Endothelial cell of umbilical vein (primary cell): ENCODE measurements at regions of chr4 and their contacts with region 1.

Region 1: GRCh38 chr4:6546681-6547447 is 28.1 kb upstream of the MAN2B2 start:
- DNase-seq: peak; percentile 44
- H3K4me3 ChIP-seq: no peak overlapping the region
- H3K27ac ChIP-seq: no peak overlapping the region
- H3K4me1 ChIP-seq: no peaks in the 10 kb centered on the region
- H3K27me3 ChIP-seq: no peaks in the 10 kb centered on the region
- CTCF ChIP-seq: peak; percentile 89 to 94
- POLR2A ChIP-seq: no peak

Region 2: GRCh38 chr4:5998333-5998936 is 548.4 kb before region 1 on chr4:
- CTCF ChIA-PET with region 1: interaction called, 14 read pairs
- POLR2A ChIA-PET with region 1: no interaction called
- dilution Hi-C with region 1: no loop called
- intact Hi-C with region 1: loop called (anchors 2 kb)
- DNase-seq: peak; percentile 46
- H3K4me3 ChIP-seq: no peak overlapping the region
- H3K27ac ChIP-seq: no peak overlapping the region
- H3K4me1 ChIP-seq: no peaks in the 10 kb centered on the region
- H3K27me3 ChIP-seq: no peaks in the 10 kb centered on the region
- CTCF ChIP-seq: peak; percentile 88 to 90
- POLR2A ChIP-seq: no peak

Region 3: GRCh38 chr4:6409381-6409780 is 137.5 kb before region 1 on chr4:
- CTCF ChIA-PET with region 1: interaction called, 3 read pairs
- POLR2A ChIA-PET with region 1: interaction called, 10 read pairs
- dilution Hi-C with region 1: no loop called
- intact Hi-C with region 1: no loop called
- DNase-seq: no peak
- H3K4me3 ChIP-seq: no peak overlapping the region
- H3K27ac ChIP-seq: no peak overlapping the region
- H3K4me1 ChIP-seq: no peaks in the 10 kb centered on the region
- H3K27me3 ChIP-seq: no peaks in the 10 kb centered on the region
- CTCF ChIP-seq: no peak
- POLR2A ChIP-seq: no peak

Region 4: GRCh38 chr4:6493658-6494304 is 53.1 kb before region 1 on chr4:
- CTCF ChIA-PET with region 1: no interaction called
- POLR2A ChIA-PET with region 1: no interaction called
- dilution Hi-C with region 1: no loop called
- intact Hi-C with region 1: loop called (anchors 2 kb)
- DNase-seq: no peak
- H3K4me3 ChIP-seq: no peak overlapping the region
- H3K27ac ChIP-seq: no peak overlapping the region
- H3K4me1 ChIP-seq: no peaks in the 10 kb centered on the region
- H3K27me3 ChIP-seq: no peaks in the 10 kb centered on the region
- CTCF ChIP-seq: no peak
- POLR2A ChIP-seq: no peak

Region 5: GRCh38 chr4:6560416-6561172 is 13.7 kb after region 1 on chr4:
- CTCF ChIA-PET with region 1: interaction called, 10 read pairs
- POLR2A ChIA-PET with region 1: no interaction called
- dilution Hi-C with region 1: no loop called
- intact Hi-C with region 1: no loop called
- DNase-seq: no peak
- H3K4me3 ChIP-seq: no peak overlapping the region
- H3K27ac ChIP-seq: no peak overlapping the region
- H3K4me1 ChIP-seq: no peaks in the 10 kb centered on the region
- H3K27me3 ChIP-seq: peaks cover 32 to 41% of the 10 kb centered on the region in 2 experiments
- CTCF ChIP-seq: no peak
- POLR2A ChIP-seq: no peak